ENCODE measurements at regions of chr15 and their contacts with region 1.

Region 1: DNA sequence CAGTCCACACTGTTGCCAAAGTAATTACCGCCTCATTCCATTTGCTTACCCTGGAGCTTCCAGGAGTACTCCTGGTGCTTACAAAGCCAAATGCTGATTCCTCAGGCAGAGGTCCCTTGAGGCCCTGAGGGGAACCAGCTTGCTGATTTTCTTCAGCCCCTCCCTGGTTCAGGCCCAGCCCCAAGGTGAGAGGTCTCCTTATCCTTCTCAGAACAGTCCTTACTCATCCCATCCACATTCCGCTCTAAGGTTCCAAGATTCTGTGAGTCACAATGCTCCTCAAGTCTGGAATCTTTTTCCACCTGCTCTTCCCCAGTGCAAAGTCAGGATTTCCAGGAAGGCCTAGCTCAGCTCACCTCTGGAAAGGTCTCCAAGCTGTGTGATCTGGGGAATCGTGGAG is 1.8 kb upstream of the ATP10A start:
- DNase-seq: no peak
- H3K4me3 ChIP-seq: no peak overlapping the region
- H3K27ac ChIP-seq: no peak overlapping the region
- H3K4me1 ChIP-seq: peaks cover 9% of the 10 kb centered on the region
- H3K27me3 ChIP-seq: no peaks in the 10 kb centered on the region
- CTCF ChIP-seq: no peak
- POLR2A ChIP-seq: no peak

Region 2: DNA sequence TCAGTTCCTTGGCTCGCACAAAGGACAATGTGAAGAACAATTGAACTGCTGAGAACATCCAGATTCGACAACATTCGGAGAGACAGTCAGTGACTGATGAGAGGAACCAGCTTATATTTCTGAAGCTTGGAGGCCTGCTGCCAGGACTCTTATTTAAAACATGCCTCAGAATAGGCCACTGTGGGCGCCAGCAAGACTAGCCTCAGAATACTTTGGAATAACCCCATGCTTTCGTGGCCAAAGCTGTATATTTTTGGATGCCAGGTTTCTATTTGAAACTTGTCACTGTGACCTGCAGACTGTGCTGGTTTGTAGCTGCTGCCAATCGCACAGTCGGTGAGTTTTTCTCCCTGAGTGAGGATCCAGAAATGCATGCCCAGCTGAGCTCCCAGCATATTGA is 296.2 kb before region 1 on chr15:
- intact Hi-C with region 1: loop called (anchors 5 kb)
- DNase-seq: peak; percentile 59
- H3K4me3 ChIP-seq: no peak overlapping the region
- H3K27ac ChIP-seq: peak overlapping the region in 1 of 2 donors; percentile 39
- H3K4me1 ChIP-seq: peaks cover 39% of the 10 kb centered on the region
- H3K27me3 ChIP-seq: no peaks in the 10 kb centered on the region
- CTCF ChIP-seq: no peak
- POLR2A ChIP-seq: no peak

Region 3: DNA sequence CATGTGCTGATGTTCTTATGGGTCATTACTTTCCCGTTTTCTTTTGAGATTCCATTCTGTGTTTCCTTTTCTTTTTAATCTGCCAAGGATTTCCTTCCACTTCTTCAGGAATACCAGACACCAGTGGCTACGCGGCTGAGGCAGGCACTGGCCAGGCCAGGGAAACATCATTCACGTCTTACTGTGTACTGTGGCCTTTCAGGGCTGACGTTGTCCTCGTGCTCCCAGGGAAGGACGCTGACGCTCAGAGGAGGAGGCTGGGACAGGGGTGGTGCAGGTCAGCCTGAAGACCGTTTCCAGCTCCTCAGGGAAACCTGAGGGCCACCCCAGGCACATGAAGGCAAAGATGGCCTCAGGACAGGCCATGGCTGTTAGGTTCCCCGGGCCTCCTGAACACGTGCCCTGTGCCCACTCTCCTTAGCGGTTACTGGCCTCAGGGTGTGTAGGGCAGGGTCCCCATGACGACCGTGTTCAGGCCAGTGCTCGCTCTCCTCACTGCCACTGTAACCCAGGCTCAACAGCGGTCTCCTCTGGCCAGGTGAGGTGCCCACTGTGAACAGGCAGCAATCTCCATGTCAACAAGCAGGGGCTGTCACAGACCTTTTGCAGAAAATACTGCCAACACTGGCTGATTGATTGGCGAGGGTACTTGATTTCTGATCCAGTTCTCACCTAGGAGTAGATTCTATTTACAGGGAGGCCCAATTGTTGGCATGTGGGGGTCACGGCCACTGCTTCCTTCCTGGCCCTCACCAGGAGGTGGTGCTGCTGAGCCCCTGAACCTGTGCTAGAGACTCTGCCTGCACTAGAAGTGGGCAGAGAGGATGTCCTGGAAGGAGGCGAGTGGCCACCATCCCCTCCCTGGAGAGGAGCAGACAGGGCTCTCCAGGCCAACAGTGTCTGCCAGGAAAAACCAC is 171.4 kb before region 1 on chr15:
- intact Hi-C with region 1: no loop called
- DNase-seq: peak; percentile 64
- H3K4me3 ChIP-seq: no peak overlapping the region
- H3K27ac ChIP-seq: no peak overlapping the region
- H3K4me1 ChIP-seq: no peaks in the 10 kb centered on the region
- H3K27me3 ChIP-seq: no peaks in the 10 kb centered on the region
- CTCF ChIP-seq: peak; percentile 10 to 63 (median 52)
- POLR2A ChIP-seq: no peak

Measured in testis (tissue), 5 donors.